ENCODE measurements at regions of chr2 and their contacts with region 1.

Region 1: GRCh38 chr2:162890690-162891311 is 52.2 kb upstream of the KCNH7 start:
- DNase-seq: peak; percentile 82
- H3K4me3 ChIP-seq: no peak overlapping the region
- H3K27ac ChIP-seq: no peak overlapping the region
- H3K4me1 ChIP-seq: peaks cover 8% of the 10 kb centered on the region
- H3K27me3 ChIP-seq: no peaks in the 10 kb centered on the region
- CTCF ChIP-seq: peak; percentile 89

Region 2: DNA sequence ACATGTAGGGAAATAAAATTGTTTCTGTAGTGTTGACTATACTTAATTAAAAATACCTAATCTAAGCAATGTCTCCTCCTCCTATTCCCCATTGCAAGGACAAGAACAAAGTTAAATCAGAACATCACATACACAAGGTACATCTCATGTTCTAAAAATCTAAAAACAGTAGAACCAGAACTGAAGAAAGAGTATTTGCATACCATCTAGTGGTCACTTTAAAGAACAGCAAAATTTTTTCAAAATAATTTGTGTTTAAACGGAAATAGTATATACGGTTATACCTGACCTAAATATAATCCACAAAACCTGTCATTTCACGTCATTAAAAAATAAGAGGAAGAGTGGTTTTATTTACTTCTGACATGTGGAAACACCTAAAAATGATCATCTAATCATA is 242.0 kb after region 1 on chr2:
- CTCF ChIA-PET with region 1: no interaction called
- POLR2A ChIA-PET with region 1: no interaction called
- intact Hi-C with region 1: loop called (anchors 1 kb)
- DNase-seq: peak; percentile 25
- H3K4me3 ChIP-seq: no peak overlapping the region
- H3K27ac ChIP-seq: no peak overlapping the region
- H3K4me1 ChIP-seq: no peaks in the 10 kb centered on the region
- H3K27me3 ChIP-seq: no peaks in the 10 kb centered on the region
- CTCF ChIP-seq: peak; percentile 58